T-cell (primary cell): ENCODE measurements at regions of chr5 and their contacts with region 1.

Region 1: DNA sequence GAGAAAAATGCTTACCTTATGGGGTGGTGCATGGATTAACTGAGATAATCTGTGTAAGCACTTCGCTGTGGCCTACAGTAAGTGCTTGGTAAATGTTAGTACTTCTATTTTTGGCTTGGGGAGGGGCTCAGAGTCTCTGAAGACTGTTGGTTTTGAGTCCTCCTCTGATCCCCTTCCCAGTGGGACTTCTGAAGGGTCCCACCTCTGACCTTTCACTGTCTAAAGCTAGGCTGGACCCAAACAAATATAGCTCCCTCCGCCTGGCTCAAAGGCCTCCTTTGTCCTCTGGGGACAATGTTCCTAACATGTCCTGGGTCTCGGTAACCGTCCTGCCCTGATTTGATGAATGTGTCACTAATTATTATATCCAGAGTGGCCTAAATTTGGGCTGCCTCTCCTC is 34.8 kb downstream of the CAMK2A start:
- DNase-seq: no peak
- ATAC-seq: no peak
- H3K4me3 ChIP-seq: no peak overlapping the region
- H3K4me3 Mint-ChIP-seq: no peak overlapping the region
- H3K27ac ChIP-seq: no peak overlapping the region
- H3K27ac Mint-ChIP-seq: no peak overlapping the region
- H3K4me1 ChIP-seq: no peaks in the 10 kb centered on the region
- H3K4me1 Mint-ChIP-seq: no peaks in the 10 kb centered on the region
- H3K27me3 ChIP-seq: peaks cover 0 to 17% of the 10 kb centered on the region in 2 experiments
- H3K27me3 Mint-ChIP-seq: peaks cover 2 to 4% of the 10 kb centered on the region in 2 donors

Region 2: DNA sequence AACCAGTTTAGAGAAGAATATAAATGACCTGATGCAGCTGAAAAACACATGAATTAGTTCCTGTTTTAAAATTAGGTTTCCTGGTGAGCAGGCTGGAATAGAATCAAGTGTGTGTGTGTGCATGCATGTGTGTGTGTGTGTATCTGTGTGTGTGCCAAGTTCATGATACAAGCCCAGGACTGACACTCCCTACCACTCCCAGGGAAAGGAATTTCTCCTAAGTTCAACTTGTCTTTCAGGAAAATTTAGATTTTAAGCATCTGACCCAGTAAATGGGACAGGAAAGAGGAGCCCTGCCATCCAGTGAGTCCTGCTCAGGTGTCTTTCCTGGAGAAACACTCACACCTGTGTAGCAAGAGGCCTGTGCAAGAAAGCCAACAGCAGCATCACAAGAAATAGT is 1180.7 kb before region 1 on chr5:
- CTCF ChIA-PET with region 1: no interaction called
- POLR2A ChIA-PET with region 1: no interaction called
- DNase-seq: no peak
- ATAC-seq: no peak
- H3K4me3 ChIP-seq: no peak overlapping the region
- H3K4me3 Mint-ChIP-seq: no peak overlapping the region
- H3K27ac ChIP-seq: no peak overlapping the region
- H3K27ac Mint-ChIP-seq: no peak overlapping the region
- H3K4me1 ChIP-seq: no peaks in the 10 kb centered on the region
- H3K4me1 Mint-ChIP-seq: no peaks in the 10 kb centered on the region
- H3K27me3 ChIP-seq: peaks cover 0 to 11% of the 10 kb centered on the region in 2 experiments
- H3K27me3 Mint-ChIP-seq: peaks cover 21 to 25% of the 10 kb centered on the region in 2 donors

Region 3: GRCh38 chr5:150234576-150235499 is 19.9 kb before region 1 on chr5:
- CTCF ChIA-PET with region 1: no interaction called
- POLR2A ChIA-PET with region 1: no interaction called
- DNase-seq: no peak
- ATAC-seq: no peak
- H3K4me3 ChIP-seq: no peak overlapping the region
- H3K4me3 Mint-ChIP-seq: no peak overlapping the region
- H3K27ac ChIP-seq: no peak overlapping the region
- H3K27ac Mint-ChIP-seq: no peak overlapping the region
- H3K4me1 ChIP-seq: no peaks in the 10 kb centered on the region
- H3K4me1 Mint-ChIP-seq: no peaks in the 10 kb centered on the region
- H3K27me3 ChIP-seq: no peaks in the 10 kb centered on the region
- H3K27me3 Mint-ChIP-seq: no peaks in the 10 kb centered on the region

Region 4: DNA sequence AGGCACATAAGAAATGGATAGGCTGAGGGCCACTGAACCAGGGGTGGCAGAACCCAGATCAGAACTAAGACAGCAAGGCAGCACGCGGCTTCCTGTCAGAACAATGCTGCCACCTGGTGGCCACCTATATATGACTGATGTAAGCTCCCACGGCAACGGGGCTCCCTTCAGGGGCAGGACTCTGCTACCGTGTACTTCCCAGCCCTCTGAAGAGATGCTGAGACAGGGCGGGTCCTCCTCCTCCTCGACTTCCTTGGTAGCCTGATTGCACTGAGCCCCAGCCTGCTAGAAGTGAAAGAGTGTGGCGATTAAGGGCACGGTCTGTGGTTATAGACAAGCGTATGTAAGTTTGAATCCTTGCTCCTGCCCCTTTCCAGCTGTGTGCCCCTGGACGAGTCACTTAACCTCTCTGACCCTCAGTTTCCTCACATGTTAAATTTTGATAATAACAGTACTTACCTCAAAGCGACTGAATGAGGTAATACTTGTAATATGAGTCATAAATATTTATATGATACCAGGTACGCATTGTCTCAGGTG is 181.4 kb after region 1 on chr5:
- CTCF ChIA-PET with region 1: interaction called in 1 of 2 experiments, 10 read pairs
- POLR2A ChIA-PET with region 1: no interaction called
- DNase-seq: peak; percentile 76 to 96 (median 88)
- ATAC-seq: peak; percentile 94 to 98 (median 96)
- H3K4me3 ChIP-seq: no peak overlapping the region
- H3K4me3 Mint-ChIP-seq: no peak overlapping the region
- H3K27ac ChIP-seq: peak overlapping the region; percentile 2
- H3K27ac Mint-ChIP-seq: peak overlapping the region; percentile 68 to 80
- H3K4me1 ChIP-seq: peaks cover 2 to 6% of the 10 kb centered on the region in 2 experiments
- H3K4me1 Mint-ChIP-seq: peaks cover 7 to 9% (median 8%) of the 10 kb centered on the region in 3 donors
- H3K27me3 ChIP-seq: no peaks in the 10 kb centered on the region
- H3K27me3 Mint-ChIP-seq: no peaks in the 10 kb centered on the region